OCI-LY7 (cell line): ENCODE measurements at regions of chr21 and their contacts with region 1.

Region 1: DNA sequence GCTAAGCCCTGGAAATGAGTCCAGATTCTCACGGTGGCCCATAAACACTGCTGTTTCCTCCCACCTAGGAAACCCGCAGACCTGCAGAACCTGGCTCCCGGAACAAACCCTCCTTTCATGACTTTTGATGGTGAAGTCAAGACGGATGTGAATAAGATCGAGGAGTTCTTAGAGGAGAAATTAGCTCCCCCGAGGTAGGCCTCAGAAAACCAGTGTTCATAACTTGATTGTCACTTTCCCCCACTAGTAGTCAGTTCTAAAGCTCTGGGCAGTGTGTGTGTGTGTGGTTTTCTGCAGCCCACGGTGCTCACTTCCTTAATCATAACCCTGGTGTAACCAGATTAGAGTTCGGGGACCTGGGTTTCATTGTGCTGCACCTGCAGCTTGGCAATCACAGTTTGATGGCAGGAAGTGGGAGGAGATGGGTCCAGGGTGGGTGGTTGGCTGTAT is 39.1 kb downstream of the CLIC6 start:
- DNase-seq: peak; percentile 31
- H3K4me3 ChIP-seq: no peak overlapping the region
- H3K27ac ChIP-seq: no peak overlapping the region
- H3K4me1 ChIP-seq: peaks cover 5% of the 10 kb centered on the region
- CTCF ChIP-seq: no peak

Region 2: GRCh38 chr21:34642211-34643075 is 65.5 kb before region 1 on chr21:
- CTCF ChIA-PET with region 1: no interaction called
- POLR2A ChIA-PET with region 1: no interaction called
- intact Hi-C with region 1: loop called (anchors 10 kb)
- DNase-seq: peak; percentile 68
- H3K4me3 ChIP-seq: no peak overlapping the region
- H3K27ac ChIP-seq: no peak overlapping the region
- H3K4me1 ChIP-seq: peaks cover 17% of the 10 kb centered on the region
- CTCF ChIP-seq: no peak

Region 3: DNA sequence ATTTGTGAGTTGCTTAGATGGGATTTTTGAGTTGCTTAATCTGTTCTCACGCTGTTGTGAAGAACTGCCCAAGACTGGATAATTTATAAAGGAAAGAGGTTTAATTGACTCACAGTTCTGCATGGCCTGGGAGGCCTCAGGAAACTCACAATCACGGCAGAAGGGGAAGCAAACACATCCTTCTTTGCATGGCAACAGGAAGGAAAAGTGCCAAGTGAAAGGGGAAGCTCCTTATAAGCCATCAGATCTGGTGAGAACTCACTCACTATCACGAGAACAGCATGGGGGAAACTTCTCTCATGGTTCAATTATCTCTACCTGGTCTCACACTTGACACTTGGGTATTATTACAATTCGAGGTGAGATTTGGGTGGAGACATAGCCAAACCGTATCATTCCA is 28.9 kb before region 1 on chr21:
- CTCF ChIA-PET with region 1: no interaction called
- POLR2A ChIA-PET with region 1: no interaction called
- intact Hi-C with region 1: no loop called
- DNase-seq: no peak
- H3K4me3 ChIP-seq: no peak overlapping the region
- H3K27ac ChIP-seq: no peak overlapping the region
- H3K4me1 ChIP-seq: no peaks in the 10 kb centered on the region
- CTCF ChIP-seq: no peak